ENCODE measurements at regions of chr1 and their contacts with region 1.

Region 1: DNA sequence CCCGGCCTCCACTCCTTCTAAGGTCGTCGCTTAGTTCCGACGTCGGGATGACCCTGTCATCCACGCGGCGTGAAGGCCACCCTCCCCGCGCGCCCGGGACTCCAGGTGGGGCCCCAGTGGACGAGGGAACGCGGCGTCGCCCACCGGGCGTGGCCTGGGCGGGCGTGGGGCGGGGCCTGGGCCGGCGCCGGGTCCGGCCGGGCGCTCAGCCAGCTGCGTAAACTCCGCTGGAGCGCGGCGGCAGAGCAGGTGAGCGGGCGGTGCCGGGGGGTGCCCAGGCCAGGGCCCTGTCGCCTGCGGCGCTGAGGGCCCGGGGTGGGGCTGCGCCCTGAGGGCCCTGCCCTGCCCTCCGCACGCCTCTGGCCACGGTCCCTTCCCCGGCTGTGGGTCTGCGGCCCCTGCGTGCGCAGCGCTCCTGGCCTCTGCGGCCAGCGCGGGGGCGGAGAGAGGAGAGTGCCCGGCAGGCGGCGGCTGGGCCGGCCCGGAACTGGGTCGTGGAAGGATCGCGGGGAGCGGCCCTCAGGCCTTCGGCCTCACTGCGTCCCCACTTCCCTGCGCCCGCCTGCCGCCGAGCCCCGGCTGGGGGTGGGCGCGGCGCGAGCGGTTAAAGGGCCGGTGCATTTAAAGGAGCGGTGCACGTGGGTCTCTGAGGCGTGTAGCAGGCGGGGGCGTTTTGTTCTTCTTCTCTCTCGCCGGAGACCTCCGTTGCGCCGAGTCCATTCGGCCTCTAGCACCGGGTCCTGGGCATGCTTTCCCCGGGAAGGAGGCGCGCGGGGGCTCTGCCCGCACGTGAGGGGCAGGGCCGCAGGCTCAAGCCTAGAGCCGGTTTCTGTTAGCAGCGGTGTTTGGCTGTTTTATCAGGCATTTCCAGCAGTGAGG is at the start of gene PSEN2:
- DNase-seq: peak; percentile 49
- H3K4me3 ChIP-seq: peak within 1 kb of the TSS; percentile 58 to 68 (median 60)
- H3K27ac ChIP-seq: peak within 1 kb of the TSS; percentile 30
- H3K4me1 ChIP-seq: peaks cover 26% of the 10 kb centered on the region
- H3K27me3 ChIP-seq: no peaks in the 10 kb centered on the region
- CTCF ChIP-seq: peak in 1 of 2 donors; percentile 25
- total RNA-seq, gene PSEN2: 15.7 to 31.2 TPM

Region 2: DNA sequence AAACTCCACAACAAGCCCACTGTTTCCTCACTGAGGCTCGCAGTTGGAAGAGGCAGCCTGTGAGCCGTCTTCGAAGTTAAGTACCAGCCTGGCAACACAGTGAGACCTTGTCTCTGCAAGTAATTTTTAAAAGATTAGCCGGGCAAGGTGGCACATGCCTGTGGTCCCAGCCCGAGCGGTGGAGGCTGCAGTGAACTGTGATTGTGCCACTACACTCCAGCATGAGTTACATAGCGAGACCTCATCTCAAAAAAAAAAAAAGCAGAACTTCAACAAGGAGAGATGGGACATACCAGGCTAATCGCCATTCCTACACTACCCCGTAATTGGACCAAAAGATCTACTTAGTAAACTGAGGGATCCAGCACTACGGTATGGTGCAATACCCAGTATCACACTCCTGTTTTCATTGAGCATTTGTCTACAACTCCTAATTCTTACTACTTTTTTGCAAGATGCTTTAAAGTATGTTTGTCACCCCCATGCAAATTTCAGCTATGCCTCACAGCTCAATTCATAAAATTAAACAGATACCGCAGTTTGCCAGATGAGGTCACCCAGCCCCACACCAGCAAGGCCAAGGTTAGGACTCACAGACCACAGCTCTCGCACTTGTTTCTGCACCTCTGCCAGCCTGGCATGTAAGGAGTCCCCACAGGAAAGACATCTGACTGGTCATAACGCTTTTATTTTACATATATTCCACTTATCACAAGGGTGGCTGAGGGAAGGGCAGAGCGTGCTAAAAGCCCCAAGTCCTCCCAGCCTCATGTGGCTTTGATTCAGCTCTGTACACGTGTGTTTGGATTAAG is 892.5 kb before region 1 on chr1:
- CTCF ChIA-PET with region 1: no interaction called
- dilution Hi-C with region 1: no loop called
- in situ Hi-C with region 1: no loop called
- intact Hi-C with region 1: no loop called
- DNase-seq: no peak
- H3K4me3 ChIP-seq: no peak overlapping the region
- H3K27ac ChIP-seq: no peak overlapping the region
- H3K4me1 ChIP-seq: no peaks in the 10 kb centered on the region
- H3K27me3 ChIP-seq: no peaks in the 10 kb centered on the region
- CTCF ChIP-seq: no peak

Region 3: GRCh38 chr1:226939438-226940028 is 68.9 kb after region 1 on chr1:
- CTCF ChIA-PET with region 1: no interaction called
- dilution Hi-C with region 1: no loop called
- in situ Hi-C with region 1: no loop called
- intact Hi-C with region 1: loop called (anchors 5 kb)
- DNase-seq: peak; percentile 54
- H3K4me3 ChIP-seq: peak overlapping the region; percentile 61 to 79 (median 77)
- H3K27ac ChIP-seq: peak overlapping the region; percentile 74
- H3K4me1 ChIP-seq: peaks cover 25% of the 10 kb centered on the region
- H3K27me3 ChIP-seq: no peaks in the 10 kb centered on the region
- CTCF ChIP-seq: no peak

Region 4: GRCh38 chr1:227038401-227038800 is 167.8 kb after region 1 on chr1:
- CTCF ChIA-PET with region 1: no interaction called
- dilution Hi-C with region 1: no loop called
- in situ Hi-C with region 1: no loop called
- intact Hi-C with region 1: no loop called
- DNase-seq: no peak
- H3K4me3 ChIP-seq: no peak overlapping the region
- H3K27ac ChIP-seq: no peak overlapping the region
- H3K4me1 ChIP-seq: no peaks in the 10 kb centered on the region
- H3K27me3 ChIP-seq: no peaks in the 10 kb centered on the region
- CTCF ChIP-seq: no peak

Measured in mammary epithelial cell (primary cell).